B cell (primary cell): ENCODE measurements at regions of chr14 and their contacts with region 1.

Region 1: GRCh38 chr14:50573858-50574257 is 13.9 kb downstream of the ATL1 start:
- DNase-seq: no peak
- ATAC-seq: no peak
- H3K4me3 ChIP-seq: no peak overlapping the region
- H3K4me3 Mint-ChIP-seq: no peak overlapping the region
- H3K27ac ChIP-seq: no peak overlapping the region
- H3K27ac Mint-ChIP-seq: no peak overlapping the region
- H3K4me1 ChIP-seq: no peaks in the 10 kb centered on the region
- H3K4me1 Mint-ChIP-seq: no peaks in the 10 kb centered on the region
- H3K27me3 ChIP-seq: no peaks in the 10 kb centered on the region
- H3K27me3 Mint-ChIP-seq: peaks cover 6% of the 10 kb centered on the region
- CTCF ChIP-seq: no peak

Region 2: GRCh38 chr14:48788771-48789170 is 1785.1 kb before region 1 on chr14:
- CTCF ChIA-PET with region 1: no interaction called
- POLR2A ChIA-PET with region 1: no interaction called
- intact Hi-C with region 1: loop called (anchors 10 kb)
- DNase-seq: no peak
- ATAC-seq: no peak
- H3K4me3 ChIP-seq: no peak overlapping the region
- H3K4me3 Mint-ChIP-seq: no peak overlapping the region
- H3K27ac ChIP-seq: no peak overlapping the region
- H3K27ac Mint-ChIP-seq: no peak overlapping the region
- H3K4me1 ChIP-seq: no peaks in the 10 kb centered on the region
- H3K4me1 Mint-ChIP-seq: no peaks in the 10 kb centered on the region
- H3K27me3 ChIP-seq: no peaks in the 10 kb centered on the region
- H3K27me3 Mint-ChIP-seq: no peaks in the 10 kb centered on the region
- CTCF ChIP-seq: no peak

Region 3: DNA sequence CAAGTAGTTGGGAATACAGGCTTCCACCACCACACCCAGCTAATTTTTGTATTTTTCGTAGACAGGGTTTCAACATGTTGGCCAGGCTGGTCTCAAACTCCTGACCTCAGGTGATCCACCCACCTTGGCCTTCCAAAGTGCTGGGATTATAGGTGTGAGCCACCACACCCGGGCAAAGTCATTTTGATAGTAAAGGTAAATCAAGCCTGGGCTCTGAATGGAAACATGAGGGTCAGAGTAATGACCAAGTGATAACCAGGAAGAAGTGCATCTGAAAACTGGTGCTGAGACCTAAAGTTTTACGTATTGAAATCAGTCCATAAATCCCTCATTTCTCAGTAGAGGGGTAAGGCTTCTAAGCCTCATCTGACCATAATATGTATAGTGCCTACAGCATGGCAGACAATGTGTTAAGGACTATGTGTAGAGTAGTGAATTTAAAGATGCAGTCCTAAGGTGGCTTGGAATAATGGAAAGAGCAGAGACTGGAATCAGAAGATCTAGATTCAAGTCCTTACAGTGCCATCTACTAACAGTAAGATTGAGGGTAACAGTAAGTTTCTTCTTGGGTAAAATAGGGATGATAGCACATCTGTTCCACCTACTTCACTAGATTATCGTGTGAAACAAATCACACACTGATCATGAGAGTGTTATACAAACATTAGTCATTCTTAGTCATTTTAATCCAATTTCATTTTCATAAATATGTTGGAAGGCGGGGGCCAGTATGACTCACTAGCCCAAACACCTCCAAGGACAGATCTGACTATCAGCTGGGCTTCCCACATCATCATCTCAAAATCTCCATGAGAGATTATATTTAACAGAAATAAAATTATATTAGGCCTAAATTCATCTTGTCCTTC is 52.7 kb before region 1 on chr14:
- CTCF ChIA-PET with region 1: no interaction called
- POLR2A ChIA-PET with region 1: no interaction called
- intact Hi-C with region 1: no loop called
- DNase-seq: no peak
- ATAC-seq: no peak
- H3K4me3 ChIP-seq: no peak overlapping the region
- H3K4me3 Mint-ChIP-seq: peak overlapping the region; percentile 62
- H3K27ac ChIP-seq: no peak overlapping the region
- H3K27ac Mint-ChIP-seq: peak overlapping the region; percentile 7
- H3K4me1 ChIP-seq: peaks cover 24 to 33% of the 10 kb centered on the region in 2 donors
- H3K4me1 Mint-ChIP-seq: peaks cover 52% of the 10 kb centered on the region
- H3K27me3 ChIP-seq: no peaks in the 10 kb centered on the region
- H3K27me3 Mint-ChIP-seq: no peaks in the 10 kb centered on the region
- CTCF ChIP-seq: no peak